ENCODE measurements at regions of chr4 and their contacts with region 1.

Region 1: DNA sequence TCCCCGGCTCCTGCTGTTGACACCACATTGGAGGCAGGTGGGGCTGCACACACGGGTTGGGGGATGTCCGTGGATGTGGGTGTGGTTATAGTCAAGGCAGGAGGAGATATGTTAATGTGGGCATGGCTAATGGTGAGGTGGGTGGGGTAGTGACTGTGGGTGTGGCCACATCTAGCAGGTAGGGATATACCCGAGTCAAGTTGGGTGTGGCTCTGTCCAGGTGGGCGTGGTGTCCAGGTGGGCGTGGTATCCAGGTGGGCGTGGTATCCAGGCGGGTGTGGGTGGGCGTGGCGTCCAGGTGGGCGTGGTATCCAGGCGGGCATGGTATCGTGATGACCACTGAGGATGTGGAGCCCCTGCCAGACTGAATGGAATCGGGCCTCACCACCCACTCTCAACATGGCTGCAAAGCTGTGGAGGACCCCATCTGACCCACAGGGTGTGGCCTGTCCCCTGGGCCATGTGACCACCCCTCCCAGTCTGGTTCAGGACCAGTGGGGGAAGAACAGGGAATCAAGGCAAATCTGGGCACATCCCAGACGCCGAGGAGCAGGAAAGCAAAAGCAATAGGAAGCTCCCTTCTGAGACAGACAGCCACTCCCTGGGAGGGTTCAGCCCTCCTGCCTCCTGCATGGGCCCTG is 21.0 kb downstream of the MAN2B2 start:
- DNase-seq: no peak
- ATAC-seq: peak in 1 of 8 donors; percentile 13
- H3K4me3 ChIP-seq: no peak overlapping the region
- H3K27ac ChIP-seq: no peak overlapping the region
- H3K4me1 ChIP-seq: no peaks in the 10 kb centered on the region
- H3K27me3 ChIP-seq: no peaks in the 10 kb centered on the region
- CTCF ChIP-seq: no peak

Region 2: DNA sequence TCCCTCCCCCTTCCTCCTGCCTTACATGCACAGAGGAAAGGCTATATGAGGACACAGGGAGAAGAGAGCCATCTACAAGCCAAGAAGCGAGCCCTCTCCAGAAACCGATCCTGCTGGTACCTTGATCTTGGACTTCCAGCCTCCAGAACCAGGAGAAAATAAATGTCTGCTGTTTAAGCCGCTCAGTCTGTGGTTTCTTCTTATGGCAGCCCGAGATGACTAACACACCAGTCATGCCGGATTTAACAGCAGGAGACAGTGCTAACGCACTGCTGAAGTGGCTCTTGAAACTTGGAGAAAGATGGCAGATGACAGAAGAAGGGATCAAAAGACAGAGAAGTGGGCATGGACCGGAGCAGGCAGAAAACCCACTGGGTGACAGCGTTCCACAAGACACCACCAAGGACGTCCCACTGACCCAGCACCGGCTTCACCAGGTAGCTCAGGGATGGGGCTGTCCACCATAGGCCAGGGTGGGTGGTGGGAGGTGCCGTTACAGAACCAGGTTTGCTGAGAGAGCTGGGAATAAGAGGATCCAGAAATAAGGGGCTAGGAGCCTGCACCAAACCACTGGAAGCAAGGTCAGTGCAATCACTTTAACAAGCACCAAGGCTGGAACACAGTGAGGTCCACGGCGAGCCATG is 27.2 kb before region 1 on chr4:
- intact Hi-C with region 1: loop called in 1 of 10 experiments (anchors 1 kb)
- DNase-seq: no peak
- ATAC-seq: no peak
- H3K4me3 ChIP-seq: no peak overlapping the region
- H3K27ac ChIP-seq: no peak overlapping the region
- H3K4me1 ChIP-seq: peaks cover 0 to 7% (median 5%) of the 10 kb centered on the region in 9 donors
- H3K27me3 ChIP-seq: peaks cover 0 to 35% (median 24%) of the 10 kb centered on the region in 7 donors
- CTCF ChIP-seq: no peak

Region 3: DNA sequence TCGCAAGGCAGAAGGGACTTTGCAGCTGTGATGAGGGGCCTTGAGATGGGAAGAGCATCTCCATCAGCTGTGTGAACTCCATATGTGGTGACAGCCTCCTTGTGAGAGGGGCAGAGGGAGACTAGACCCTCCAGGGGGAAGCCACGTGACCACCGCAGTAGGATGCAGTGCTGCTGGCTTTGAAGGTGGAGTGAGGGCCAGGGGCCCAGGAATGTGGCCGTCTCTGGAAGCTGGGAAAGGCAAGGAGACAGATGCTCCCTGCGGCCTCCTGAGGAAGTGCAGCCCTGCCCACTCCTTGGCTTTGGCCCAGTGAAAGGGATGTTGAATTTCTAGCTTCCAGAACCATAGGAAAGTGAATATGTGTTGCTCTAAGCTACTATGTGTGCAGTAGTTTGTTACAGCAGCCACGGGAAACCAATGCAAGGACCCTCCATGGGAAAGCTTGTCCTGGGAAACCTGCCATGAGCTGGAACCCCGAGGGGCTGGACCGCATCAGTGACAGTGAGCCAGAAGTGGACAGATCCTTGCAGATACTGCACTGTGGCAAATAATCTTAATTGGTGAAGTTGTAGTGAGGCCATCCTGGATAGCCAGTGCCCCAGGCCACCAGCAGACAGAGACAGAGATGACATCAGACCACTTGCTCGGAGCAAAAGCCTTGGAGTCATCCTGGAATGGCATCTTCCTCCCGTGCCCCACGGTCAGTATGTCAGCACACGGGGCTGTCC is 560.9 kb after region 1 on chr4:
- intact Hi-C with region 1: no loop called
- DNase-seq: peak in 1 of 2 donors; percentile 49
- ATAC-seq: peak; percentile 51 to 77 (median 54)
- H3K4me3 ChIP-seq: no peak overlapping the region
- H3K27ac ChIP-seq: peak overlapping the region in 5 of 10 donors; percentile 0 to 85 (median 72)
- H3K4me1 ChIP-seq: peaks cover 5 to 30% (median 17%) of the 10 kb centered on the region in 9 donors
- H3K27me3 ChIP-seq: no peaks in the 10 kb centered on the region
- CTCF ChIP-seq: peak; percentile 23 to 75 (median 64)

Region 4: DNA sequence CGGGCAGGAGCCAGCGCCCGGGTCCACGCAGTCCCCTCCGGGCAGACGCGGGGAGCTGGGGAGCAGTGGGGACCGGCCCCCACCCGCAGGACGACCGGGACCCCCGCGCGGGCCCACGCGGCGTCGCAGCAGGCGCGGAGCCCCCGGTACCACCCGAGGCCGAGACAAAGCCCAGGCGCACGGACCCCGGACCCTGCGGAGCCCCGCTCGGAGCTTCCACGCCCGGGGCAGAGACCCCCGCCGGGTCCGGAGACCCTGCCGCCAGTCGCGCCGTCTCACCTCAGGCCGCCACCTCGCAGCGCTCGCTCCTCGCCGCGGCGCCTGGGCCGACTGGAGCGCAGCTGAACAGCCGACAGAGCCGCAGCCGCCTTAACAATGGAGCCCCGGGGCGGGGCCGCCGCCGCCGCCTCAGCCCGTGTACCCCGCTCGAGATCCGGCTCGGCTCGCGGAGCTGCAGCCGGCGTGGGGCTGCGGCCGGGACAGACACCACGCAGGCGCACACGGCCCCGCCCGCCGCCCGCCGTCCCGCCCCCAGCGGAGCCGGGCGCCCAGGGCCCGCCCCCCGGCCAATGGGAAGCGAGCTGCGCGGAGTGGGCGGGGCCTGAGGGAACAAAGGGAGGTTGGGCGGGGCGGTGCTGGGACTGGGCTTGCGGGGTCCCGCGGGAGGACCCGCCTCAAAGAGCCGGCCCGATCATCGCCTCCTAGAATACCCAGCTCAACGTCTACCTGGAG is 1343.5 kb after region 1 on chr4 and contains the start of gene AFAP1:
- intact Hi-C with region 1: no loop called
- DNase-seq: peak; percentile 91 to 92
- ATAC-seq: peak; percentile 95 to 98 (median 97)
- H3K4me3 ChIP-seq: peak within 1 kb of the TSS; percentile 77 to 93 (median 86)
- H3K27ac ChIP-seq: peak within 1 kb of the TSS; percentile 75 to 95 (median 92)
- H3K4me1 ChIP-seq: peaks cover 0 to 31% (median 19%) of the 10 kb centered on the region in 9 donors
- H3K27me3 ChIP-seq: peaks cover 0 to 34% (median 0%) of the 10 kb centered on the region in 7 donors
- CTCF ChIP-seq: no peak
- total RNA-seq, gene AFAP1: 4.7 to 8.9 (median 6.2) TPM

Measured in heart right ventricle (tissue), 16 donors.